Motor neuron (in vitro differentiated cells): ENCODE measurements at regions of chr22 and their contacts with region 1.

Region 1: DNA sequence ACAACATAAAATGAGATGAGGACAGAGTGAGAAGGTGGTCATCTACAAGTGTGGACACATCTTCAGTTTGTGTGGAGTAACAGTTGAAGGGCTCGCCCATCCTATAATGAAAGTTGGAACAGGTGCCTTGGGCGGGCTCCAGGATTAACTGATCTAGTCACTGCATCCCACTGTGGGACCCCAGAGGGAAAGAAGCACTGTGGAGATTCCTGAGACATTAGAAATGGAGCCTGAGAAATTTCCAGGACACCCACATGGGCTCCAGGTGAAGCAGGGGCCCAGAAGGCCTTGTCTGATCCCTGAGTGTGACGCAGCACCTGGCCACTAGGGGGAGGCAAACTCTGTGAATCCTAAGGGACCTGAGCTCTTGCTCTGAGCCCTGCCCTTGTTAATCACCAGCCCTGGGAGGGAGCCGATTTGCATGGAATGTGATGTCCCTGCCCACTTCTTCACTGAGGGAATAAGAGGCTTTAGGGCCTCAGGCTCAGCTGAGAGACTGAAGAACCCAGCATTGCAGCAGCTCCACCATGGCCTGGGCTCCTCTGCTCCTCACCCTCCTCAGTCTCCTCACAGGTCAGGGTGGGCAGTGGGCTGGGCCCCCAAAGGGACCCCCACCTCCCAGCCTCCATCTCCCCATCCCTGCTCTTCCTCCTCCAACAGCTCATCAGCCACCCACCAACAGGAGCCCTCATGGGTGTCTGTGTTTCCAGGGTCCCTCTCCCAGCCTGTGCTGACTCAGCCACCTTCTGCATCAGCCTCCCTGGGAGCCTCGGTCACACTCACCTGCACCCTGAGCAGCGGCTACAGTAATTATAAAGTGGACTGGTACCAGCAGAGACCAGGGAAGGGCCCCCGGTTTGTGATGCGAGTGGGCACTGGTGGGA is 98.4 kb downstream of the VPREB1 start:
- ATAC-seq: peak in 4 of 8 experiments; percentile 18 to 100 (median 100)
- H3K4me3 ChIP-seq: no peak overlapping the region
- H3K27ac ChIP-seq: no peak overlapping the region
- H3K4me1 ChIP-seq: no peaks in the 10 kb centered on the region

Region 2: GRCh38 chr22:21894799-21895198 is 448.1 kb before region 1 on chr22:
- in situ Hi-C with region 1: no loop called
- ATAC-seq: no peak
- H3K4me3 ChIP-seq: no peak overlapping the region
- H3K27ac ChIP-seq: no peak overlapping the region
- H3K4me1 ChIP-seq: no peaks in the 10 kb centered on the region

Region 3: DNA sequence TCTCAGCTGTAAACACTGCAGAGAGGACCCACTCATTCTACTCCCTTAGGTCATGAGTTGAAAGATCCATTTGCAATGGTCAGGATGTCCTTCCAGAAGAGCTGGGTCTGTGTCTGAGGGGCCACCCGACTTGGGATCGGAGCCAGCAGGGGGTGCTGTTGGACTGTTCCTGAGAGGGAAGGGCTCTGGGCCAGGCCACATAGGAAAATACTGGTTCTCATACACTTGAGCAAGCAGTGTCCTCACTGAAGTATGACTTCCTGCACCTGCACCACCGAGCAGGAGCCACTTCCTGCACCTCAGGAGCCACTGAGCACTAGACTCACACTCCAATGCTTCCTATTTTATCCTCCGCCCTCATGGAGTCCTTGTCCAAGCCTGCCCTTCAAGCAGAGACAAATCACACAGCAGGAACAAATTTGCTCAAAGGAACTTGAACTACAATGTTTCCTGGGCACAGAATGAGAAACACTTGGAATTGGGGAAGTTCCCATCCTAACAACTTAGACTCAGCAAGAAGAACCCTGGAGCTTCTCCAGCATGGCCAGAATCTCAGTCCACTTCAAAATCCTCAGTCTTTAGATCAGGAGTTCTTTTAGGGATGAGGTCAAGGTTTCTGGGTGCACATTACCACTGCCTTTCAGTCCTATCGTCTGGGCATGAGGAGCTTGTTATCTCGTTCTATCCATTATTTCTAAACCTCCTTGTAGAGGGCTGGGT is 134.9 kb before region 1 on chr22:
- in situ Hi-C with region 1: loop called in 2 of 9 experiments (anchors 25 kb)
- ATAC-seq: peak in 5 of 8 experiments; percentile 35 to 99 (median 98)
- H3K4me3 ChIP-seq: no peak overlapping the region
- H3K27ac ChIP-seq: peak overlapping the region; percentile 36 to 39
- H3K4me1 ChIP-seq: no peaks in the 10 kb centered on the region